T-cell (primary cell): ENCODE measurements at regions of chr9 and their contacts with region 1.

Region 1: DNA sequence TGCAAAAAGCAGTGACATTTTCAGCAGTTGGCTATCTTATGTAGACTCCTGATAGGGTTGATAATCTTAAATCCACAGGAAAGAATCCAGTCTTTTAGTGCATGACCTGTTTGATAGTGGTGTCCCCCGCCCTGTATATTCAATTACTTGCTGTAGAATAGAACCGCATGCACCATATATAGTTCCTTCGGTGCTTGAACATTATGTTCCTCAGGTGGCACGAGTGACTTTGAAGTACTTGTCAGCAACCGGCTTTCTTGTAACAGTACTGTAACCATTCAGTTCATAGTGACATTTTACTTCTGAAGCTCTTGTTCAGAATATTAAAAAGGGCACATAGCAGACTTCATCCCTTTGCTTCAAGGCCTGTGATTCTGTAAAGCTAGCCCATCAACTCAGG is 163.2 kb upstream of the KLF9 start:
- DNase-seq: no peak
- ATAC-seq: no peak
- H3K4me3 ChIP-seq: no peak overlapping the region
- H3K4me3 Mint-ChIP-seq: no peak overlapping the region
- H3K27ac ChIP-seq: no peak overlapping the region
- H3K27ac Mint-ChIP-seq: no peak overlapping the region
- H3K4me1 ChIP-seq: no peaks in the 10 kb centered on the region
- H3K4me1 Mint-ChIP-seq: peaks cover 0 to 6% (median 0%) of the 10 kb centered on the region in 3 donors
- H3K27me3 ChIP-seq: no peaks in the 10 kb centered on the region
- H3K27me3 Mint-ChIP-seq: no peaks in the 10 kb centered on the region

Region 2: DNA sequence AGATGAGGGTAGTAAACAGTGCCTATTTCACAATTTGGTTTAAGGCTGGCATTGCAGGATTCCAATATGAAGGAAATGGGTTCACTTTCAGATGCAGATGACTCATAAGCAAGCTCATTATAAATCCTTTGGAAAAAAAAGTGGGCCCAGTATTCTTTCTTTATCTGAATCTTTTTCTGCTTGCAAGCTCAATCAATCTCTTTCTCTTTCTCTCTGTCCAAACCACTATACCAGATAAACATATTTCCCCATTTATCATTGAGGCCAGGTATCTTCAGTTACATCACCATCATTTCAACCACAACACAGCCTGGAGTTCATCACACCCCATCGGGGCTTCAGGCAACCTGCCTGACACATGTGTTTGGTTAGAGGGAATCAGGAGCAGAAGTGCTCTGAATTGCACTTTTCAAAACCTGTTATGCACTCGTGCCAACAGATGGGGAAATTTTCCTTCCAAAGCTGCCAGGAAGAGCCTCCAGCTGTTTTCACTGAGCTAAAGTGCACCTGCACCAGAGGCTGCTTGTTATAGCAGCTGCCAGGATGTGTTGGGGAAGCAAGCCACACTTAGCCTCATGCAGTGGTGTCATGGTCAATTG is 564.0 kb before region 1 on chr9:
- CTCF ChIA-PET with region 1: no interaction called
- POLR2A ChIA-PET with region 1: no interaction called
- DNase-seq: no peak
- ATAC-seq: no peak
- H3K4me3 ChIP-seq: no peak overlapping the region
- H3K4me3 Mint-ChIP-seq: no peak overlapping the region
- H3K27ac ChIP-seq: no peak overlapping the region
- H3K27ac Mint-ChIP-seq: no peak overlapping the region
- H3K4me1 ChIP-seq: no peaks in the 10 kb centered on the region
- H3K4me1 Mint-ChIP-seq: no peaks in the 10 kb centered on the region
- H3K27me3 ChIP-seq: no peaks in the 10 kb centered on the region
- H3K27me3 Mint-ChIP-seq: peaks cover 3 to 4% of the 10 kb centered on the region in 2 donors

Region 3: DNA sequence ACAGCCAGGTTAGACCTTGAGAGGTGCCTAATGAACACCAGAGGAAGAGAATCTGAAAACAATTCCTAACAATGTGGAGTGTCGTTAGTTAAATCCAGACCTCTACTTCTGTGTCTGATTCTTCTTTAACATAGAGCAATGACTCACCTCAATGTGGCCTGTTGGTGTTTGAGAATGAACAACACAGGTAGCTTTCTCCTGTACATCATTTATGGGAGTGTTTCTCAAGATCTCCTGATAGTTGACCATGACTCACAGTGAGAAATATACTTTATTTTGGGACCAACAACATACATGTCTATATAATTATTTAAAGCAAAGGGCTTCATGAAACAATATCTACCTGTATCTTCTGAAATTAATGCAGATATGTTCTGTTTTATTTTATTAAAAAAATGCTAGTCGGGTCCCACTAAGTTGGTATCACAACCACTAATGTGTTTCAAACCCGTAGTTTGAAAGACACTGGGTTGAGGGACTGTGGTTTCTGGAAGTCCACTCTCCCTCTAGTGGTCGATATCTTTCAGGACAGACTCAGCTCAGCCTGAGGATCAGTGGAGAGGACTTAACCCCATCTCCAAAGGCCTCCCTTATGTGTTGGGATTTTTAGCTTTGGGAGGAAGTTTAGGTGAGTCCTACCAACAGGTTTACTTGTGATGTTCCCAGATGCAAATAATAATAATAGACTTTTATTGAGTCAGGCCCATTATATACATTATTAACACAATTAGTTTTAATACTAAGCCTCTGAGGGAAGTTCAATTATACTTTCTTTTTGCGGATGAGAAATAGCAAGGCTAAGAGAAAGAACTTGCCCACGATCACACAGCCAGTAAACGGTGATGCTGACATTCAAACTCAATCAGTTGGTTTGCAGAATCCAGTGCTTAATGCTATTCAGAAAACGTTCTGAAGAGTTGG is 93.2 kb before region 1 on chr9:
- CTCF ChIA-PET with region 1: interaction called in 1 of 2 experiments, 14 read pairs
- POLR2A ChIA-PET with region 1: no interaction called
- DNase-seq: peak in 10 of 35 experiments; percentile 3 to 69 (median 10)
- ATAC-seq: peak; percentile 68 to 85 (median 74)
- H3K4me3 ChIP-seq: no peak overlapping the region
- H3K4me3 Mint-ChIP-seq: no peak overlapping the region
- H3K27ac ChIP-seq: no peak overlapping the region
- H3K27ac Mint-ChIP-seq: no peak overlapping the region
- H3K4me1 ChIP-seq: no peaks in the 10 kb centered on the region
- H3K4me1 Mint-ChIP-seq: peaks cover 9 to 11% (median 10%) of the 10 kb centered on the region in 3 donors
- H3K27me3 ChIP-seq: no peaks in the 10 kb centered on the region
- H3K27me3 Mint-ChIP-seq: peaks cover 0 to 1% of the 10 kb centered on the region in 2 donors

Region 4: DNA sequence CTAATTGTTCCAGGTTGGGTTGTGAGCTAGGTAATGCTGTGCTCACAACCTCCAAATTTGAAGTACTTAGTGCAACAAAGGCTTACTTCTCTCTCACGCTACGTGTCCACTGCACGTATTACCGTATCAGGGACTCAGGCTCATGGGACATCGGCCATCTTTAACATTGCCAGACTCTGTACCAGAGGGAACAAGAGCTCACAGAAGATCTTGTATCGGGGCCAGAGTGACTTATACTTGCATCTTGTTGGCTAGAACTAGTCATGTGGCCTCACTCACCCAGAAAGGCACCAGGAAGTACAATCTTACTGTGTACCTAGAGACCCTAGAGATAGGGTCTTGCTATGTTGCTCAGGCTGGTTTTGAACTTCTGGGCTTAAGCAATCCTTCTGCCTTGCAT is 82.2 kb before region 1 on chr9:
- CTCF ChIA-PET with region 1: no interaction called
- POLR2A ChIA-PET with region 1: no interaction called
- DNase-seq: no peak
- ATAC-seq: no peak
- H3K4me3 ChIP-seq: no peak overlapping the region
- H3K4me3 Mint-ChIP-seq: no peak overlapping the region
- H3K27ac ChIP-seq: no peak overlapping the region
- H3K27ac Mint-ChIP-seq: no peak overlapping the region
- H3K4me1 ChIP-seq: peaks cover 0 to 8% of the 10 kb centered on the region in 2 experiments
- H3K4me1 Mint-ChIP-seq: peaks cover 13 to 28% (median 20%) of the 10 kb centered on the region in 3 donors
- H3K27me3 ChIP-seq: peaks cover 0 to 9% of the 10 kb centered on the region in 2 experiments
- H3K27me3 Mint-ChIP-seq: peaks cover 0 to 2% of the 10 kb centered on the region in 2 donors

Region 5: GRCh38 chr9:70519912-70520724 is 57.6 kb before region 1 on chr9:
- CTCF ChIA-PET with region 1: no interaction called
- POLR2A ChIA-PET with region 1: no interaction called
- DNase-seq: no peak
- ATAC-seq: no peak
- H3K4me3 ChIP-seq: no peak overlapping the region
- H3K4me3 Mint-ChIP-seq: no peak overlapping the region
- H3K27ac ChIP-seq: no peak overlapping the region
- H3K27ac Mint-ChIP-seq: no peak overlapping the region
- H3K4me1 ChIP-seq: no peaks in the 10 kb centered on the region
- H3K4me1 Mint-ChIP-seq: peaks cover 0 to 9% (median 7%) of the 10 kb centered on the region in 3 donors
- H3K27me3 ChIP-seq: peaks cover 0 to 3% of the 10 kb centered on the region in 2 experiments
- H3K27me3 Mint-ChIP-seq: no peaks in the 10 kb centered on the region

Region 6: GRCh38 chr9:70589571-70590314 is 12.1 kb after region 1 on chr9:
- CTCF ChIA-PET with region 1: no interaction called
- POLR2A ChIA-PET with region 1: no interaction called
- DNase-seq: no peak
- ATAC-seq: no peak
- H3K4me3 ChIP-seq: no peak overlapping the region
- H3K4me3 Mint-ChIP-seq: no peak overlapping the region
- H3K27ac ChIP-seq: no peak overlapping the region
- H3K27ac Mint-ChIP-seq: no peak overlapping the region
- H3K4me1 ChIP-seq: no peaks in the 10 kb centered on the region
- H3K4me1 Mint-ChIP-seq: no peaks in the 10 kb centered on the region
- H3K27me3 ChIP-seq: peaks cover 0 to 3% of the 10 kb centered on the region in 2 experiments
- H3K27me3 Mint-ChIP-seq: peaks cover 0 to 3% of the 10 kb centered on the region in 2 donors

Region 7: GRCh38 chr9:70618784-70619183 is 41.1 kb after region 1 on chr9:
- CTCF ChIA-PET with region 1: no interaction called
- POLR2A ChIA-PET with region 1: interaction called in 1 of 2 experiments, 12 read pairs
- DNase-seq: no peak
- ATAC-seq: no peak
- H3K4me3 ChIP-seq: no peak overlapping the region
- H3K4me3 Mint-ChIP-seq: no peak overlapping the region
- H3K27ac ChIP-seq: no peak overlapping the region
- H3K27ac Mint-ChIP-seq: no peak overlapping the region
- H3K4me1 ChIP-seq: no peaks in the 10 kb centered on the region
- H3K4me1 Mint-ChIP-seq: no peaks in the 10 kb centered on the region
- H3K27me3 ChIP-seq: peaks cover 0 to 6% of the 10 kb centered on the region in 2 experiments
- H3K27me3 Mint-ChIP-seq: no peaks in the 10 kb centered on the region